Naive thymus-derived CD4-positive, alpha-beta T cell (primary cell): ENCODE measurements at regions of chr5 and their contacts with region 1.

Region 1: GRCh38 chr5:68272289-68272688 is 56.7 kb downstream of the PIK3R1 start:
- DNase-seq: peak in 3 of 9 donors; percentile 32 to 45 (median 37)
- ATAC-seq: no peak
- H3K4me3 ChIP-seq: no peak overlapping the region
- H3K4me3 Mint-ChIP-seq: peak overlapping the region in 2 of 10 donors; percentile 13 to 17
- H3K27ac ChIP-seq: no peak overlapping the region
- H3K27ac Mint-ChIP-seq: peak overlapping the region in 8 of 9 donors; percentile 4 to 95 (median 58)
- H3K4me1 ChIP-seq: peaks cover 68 to 80% of the 10 kb centered on the region in 2 donors
- H3K4me1 Mint-ChIP-seq: peaks cover 33 to 92% (median 80%) of the 10 kb centered on the region in 7 donors
- H3K27me3 ChIP-seq: no peaks in the 10 kb centered on the region
- H3K27me3 Mint-ChIP-seq: no peaks in the 10 kb centered on the region

Region 2: DNA sequence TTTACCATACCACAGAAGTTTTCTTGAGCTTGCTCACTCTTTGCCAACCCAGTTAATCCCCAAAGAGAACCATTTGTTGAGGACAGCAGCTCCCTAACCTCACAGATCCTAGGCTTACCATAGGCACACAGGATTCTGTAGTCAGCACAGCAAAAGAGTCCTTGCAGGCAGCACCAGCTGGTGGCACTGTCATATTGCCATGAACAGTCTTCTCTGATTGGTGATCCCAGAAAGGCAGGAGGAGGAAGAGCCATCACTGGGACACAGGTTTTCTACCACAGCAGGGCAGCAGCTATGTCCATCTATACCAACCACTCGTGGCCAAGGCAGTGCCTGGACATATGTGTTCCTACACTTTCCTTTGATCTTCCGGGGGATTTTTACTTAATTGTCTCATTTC is 778.6 kb before region 1 on chr5:
- CTCF ChIA-PET with region 1: no interaction called
- POLR2A ChIA-PET with region 1: no interaction called
- intact Hi-C with region 1: loop called in 1 of 2 experiments (anchors 1 kb)
- DNase-seq: peak in 1 of 9 donors; percentile 13
- ATAC-seq: peak; percentile 29
- H3K4me3 ChIP-seq: no peak overlapping the region
- H3K4me3 Mint-ChIP-seq: no peak overlapping the region
- H3K27ac ChIP-seq: no peak overlapping the region
- H3K27ac Mint-ChIP-seq: peak overlapping the region in 1 of 9 donors; percentile 44
- H3K4me1 ChIP-seq: no peaks in the 10 kb centered on the region
- H3K4me1 Mint-ChIP-seq: peaks cover 0 to 27% (median 6%) of the 10 kb centered on the region in 7 donors
- H3K27me3 ChIP-seq: no peaks in the 10 kb centered on the region
- H3K27me3 Mint-ChIP-seq: no peaks in the 10 kb centered on the region

Region 3: DNA sequence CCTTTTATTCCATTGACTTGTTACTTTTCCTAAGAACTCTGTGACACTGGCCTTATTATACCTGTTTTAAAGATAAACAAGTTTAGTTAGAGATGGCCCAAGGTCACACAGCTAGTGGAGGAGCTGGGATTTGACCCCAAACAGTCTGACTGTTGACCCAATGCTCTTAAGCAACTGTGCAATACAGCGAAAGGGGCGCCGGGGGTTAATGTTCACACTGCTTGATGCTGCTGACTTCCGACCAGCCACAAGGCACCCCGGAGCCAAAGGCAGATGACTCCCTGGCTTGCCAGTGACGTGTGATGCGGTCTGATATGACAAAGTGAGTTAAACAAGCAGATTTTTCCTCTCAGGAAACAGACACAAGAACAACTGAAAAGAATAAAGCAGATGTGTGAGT is 32.8 kb before region 1 on chr5:
- CTCF ChIA-PET with region 1: interaction called, 3 read pairs
- POLR2A ChIA-PET with region 1: interaction called, 3 read pairs
- intact Hi-C with region 1: loop called in 1 of 2 experiments (anchors 5 kb)
- DNase-seq: peak; percentile 50 to 91 (median 86)
- ATAC-seq: peak; percentile 98
- H3K4me3 ChIP-seq: no peak overlapping the region
- H3K4me3 Mint-ChIP-seq: peak overlapping the region; percentile 11 to 84 (median 70)
- H3K27ac ChIP-seq: peak overlapping the region; percentile 70
- H3K27ac Mint-ChIP-seq: peak overlapping the region; percentile 69 to 98 (median 87)
- H3K4me1 ChIP-seq: peaks cover 41 to 51% of the 10 kb centered on the region in 2 donors
- H3K4me1 Mint-ChIP-seq: peaks cover 52 to 93% (median 90%) of the 10 kb centered on the region in 7 donors
- H3K27me3 ChIP-seq: no peaks in the 10 kb centered on the region
- H3K27me3 Mint-ChIP-seq: no peaks in the 10 kb centered on the region

Region 4: DNA sequence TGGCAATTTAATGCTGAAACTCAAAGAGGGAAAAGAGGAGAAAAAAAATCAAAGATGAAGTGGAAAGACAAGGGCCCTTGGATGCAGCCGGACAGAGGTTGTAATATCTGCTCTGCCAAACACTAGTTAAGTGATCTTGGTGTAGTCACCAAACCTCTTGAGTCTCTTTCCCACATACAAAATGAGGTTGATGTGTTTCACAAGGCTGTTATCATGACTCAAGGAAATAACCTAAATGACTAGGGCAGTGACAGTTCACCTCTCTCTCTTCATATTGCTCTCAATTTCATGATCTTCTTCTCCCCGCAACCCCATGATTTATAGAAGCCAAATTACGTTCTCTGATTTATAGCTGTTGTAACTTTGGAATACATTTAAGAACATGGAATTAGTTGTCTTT is 11.8 kb before region 1 on chr5:
- CTCF ChIA-PET with region 1: interaction called, 7 read pairs
- POLR2A ChIA-PET with region 1: interaction called, 39 read pairs
- intact Hi-C with region 1: loop called (anchors 1 to 2 kb)
- DNase-seq: no peak
- ATAC-seq: no peak
- H3K4me3 ChIP-seq: no peak overlapping the region
- H3K4me3 Mint-ChIP-seq: peak overlapping the region in 3 of 10 donors; percentile 16 to 76 (median 19)
- H3K27ac ChIP-seq: no peak overlapping the region
- H3K27ac Mint-ChIP-seq: peak overlapping the region in 8 of 9 donors; percentile 23 to 95 (median 76)
- H3K4me1 ChIP-seq: peaks cover 64 to 81% of the 10 kb centered on the region in 2 donors
- H3K4me1 Mint-ChIP-seq: peaks cover 53 to 91% (median 90%) of the 10 kb centered on the region in 7 donors
- H3K27me3 ChIP-seq: no peaks in the 10 kb centered on the region
- H3K27me3 Mint-ChIP-seq: no peaks in the 10 kb centered on the region